Activated CD4-positive, alpha-beta T cell treated with anti-CD3 and anti-CD28 coated beads, Interleukin-2, amount 10 ng/mL, durations not matched to agents 24 days and 14 days (primary cell): ENCODE measurements at regions of chr6 and their contacts with region 1.

Region 1: DNA sequence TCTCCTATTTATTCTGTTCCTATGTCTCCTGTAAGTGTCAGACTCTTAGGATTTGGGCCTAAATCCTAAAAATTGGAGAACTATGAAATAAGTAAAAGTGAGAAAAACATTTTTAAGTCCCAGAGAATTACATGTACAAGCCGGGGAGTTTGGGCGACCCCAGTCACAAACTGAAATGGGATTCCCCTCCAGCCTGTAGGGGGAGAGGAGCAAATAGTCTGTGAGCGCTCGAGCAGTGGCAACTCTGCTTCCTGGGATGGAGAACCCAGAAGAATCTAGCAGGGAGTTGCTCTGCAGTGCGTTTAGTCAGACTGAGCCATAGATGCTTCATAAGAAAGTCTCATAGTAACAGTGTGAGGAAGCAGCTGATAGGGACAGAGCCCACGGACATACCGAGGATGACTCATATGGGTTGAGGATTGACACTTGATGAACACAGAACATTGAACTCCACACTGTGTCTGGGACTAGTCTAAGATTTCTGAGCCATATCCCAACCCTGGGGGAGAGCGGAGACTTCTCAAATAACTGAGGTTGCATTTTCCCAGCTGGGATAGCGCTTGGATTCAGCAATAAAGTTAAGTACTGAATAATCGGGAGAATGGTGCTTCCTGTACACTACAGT is 437.2 kb downstream of the BCKDHB start:
- DNase-seq: no peak
- H3K4me3 Mint-ChIP-seq: no peak overlapping the region
- H3K27ac Mint-ChIP-seq: no peak overlapping the region
- H3K4me1 Mint-ChIP-seq: peaks cover 22% of the 10 kb centered on the region
- H3K27me3 Mint-ChIP-seq: no peaks in the 10 kb centered on the region

Region 2: GRCh38 chr6:80163658-80164187 is 380.0 kb before region 1 on chr6:
- intact Hi-C with region 1: loop called (anchors 1 kb)
- DNase-seq: peak; percentile 73
- H3K4me3 Mint-ChIP-seq: no peak overlapping the region
- H3K27ac Mint-ChIP-seq: no peak overlapping the region
- H3K4me1 Mint-ChIP-seq: peaks cover 15% of the 10 kb centered on the region
- H3K27me3 Mint-ChIP-seq: no peaks in the 10 kb centered on the region

Region 3: DNA sequence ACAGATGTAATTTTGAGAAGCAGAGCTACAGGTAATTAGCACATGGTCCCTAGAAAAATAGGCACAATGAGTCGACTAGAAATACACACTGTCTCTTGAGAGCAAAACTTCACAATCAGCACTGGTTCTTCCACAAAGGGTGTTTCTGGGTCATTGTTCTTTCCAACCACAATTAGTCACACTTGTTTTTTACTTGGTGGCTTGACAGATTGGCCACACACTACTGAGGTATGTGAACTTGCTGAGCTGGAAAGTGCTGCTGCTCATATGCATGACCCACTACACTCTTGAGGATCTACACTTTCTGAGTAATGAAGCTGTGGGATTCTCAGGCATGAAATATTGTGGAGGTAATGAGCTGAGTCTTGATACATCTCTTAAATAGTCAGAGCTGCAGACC is 89.5 kb before region 1 on chr6:
- intact Hi-C with region 1: loop called (anchors 2 kb)
- DNase-seq: no peak
- H3K4me3 Mint-ChIP-seq: no peak overlapping the region
- H3K27ac Mint-ChIP-seq: no peak overlapping the region
- H3K4me1 Mint-ChIP-seq: peaks cover 4% of the 10 kb centered on the region
- H3K27me3 Mint-ChIP-seq: no peaks in the 10 kb centered on the region

Region 4: DNA sequence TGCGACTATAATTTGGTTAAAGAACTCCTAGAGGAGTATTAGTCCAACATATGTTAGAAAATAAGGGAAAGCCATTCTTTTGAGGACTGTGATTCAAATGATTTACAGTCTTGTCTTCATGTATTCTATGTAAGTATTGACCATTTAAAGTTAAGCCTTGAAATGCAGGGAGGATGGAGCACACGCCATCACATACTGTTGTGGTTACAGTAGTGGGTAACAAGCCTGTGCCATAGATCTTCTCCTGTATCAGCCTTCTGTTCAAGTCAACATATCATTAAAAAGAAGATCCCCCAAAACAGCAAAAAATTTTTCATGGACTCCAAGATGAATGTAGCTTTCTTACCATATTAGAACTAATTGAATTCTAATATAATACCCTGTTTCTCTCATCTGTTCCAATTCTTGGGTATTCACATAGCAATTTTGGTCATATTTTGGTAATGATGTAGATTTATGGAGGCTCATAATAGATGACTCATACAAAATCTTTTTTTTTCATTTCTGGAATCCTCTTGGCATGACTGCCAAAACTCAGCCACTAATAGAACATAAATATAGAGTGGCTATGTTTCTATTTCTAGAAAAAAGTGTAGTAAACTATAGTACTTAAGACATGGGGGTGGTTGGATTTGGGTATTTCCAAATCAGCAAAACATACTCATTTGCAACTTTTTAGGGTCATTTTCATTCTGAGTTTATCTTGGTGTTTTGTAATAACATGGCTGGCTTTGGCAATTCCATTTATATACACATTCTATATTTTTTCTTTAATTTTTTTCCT is 23.7 kb before region 1 on chr6:
- intact Hi-C with region 1: no loop called
- DNase-seq: no peak
- H3K4me3 Mint-ChIP-seq: no peak overlapping the region
- H3K27ac Mint-ChIP-seq: no peak overlapping the region
- H3K4me1 Mint-ChIP-seq: peaks cover 8% of the 10 kb centered on the region
- H3K27me3 Mint-ChIP-seq: peaks cover 2% of the 10 kb centered on the region

Region 5: GRCh38 chr6:80566361-80566760 is 22.7 kb after region 1 on chr6:
- intact Hi-C with region 1: no loop called
- DNase-seq: no peak
- H3K4me3 Mint-ChIP-seq: no peak overlapping the region
- H3K27ac Mint-ChIP-seq: no peak overlapping the region
- H3K4me1 Mint-ChIP-seq: no peaks in the 10 kb centered on the region
- H3K27me3 Mint-ChIP-seq: no peaks in the 10 kb centered on the region

Region 6: DNA sequence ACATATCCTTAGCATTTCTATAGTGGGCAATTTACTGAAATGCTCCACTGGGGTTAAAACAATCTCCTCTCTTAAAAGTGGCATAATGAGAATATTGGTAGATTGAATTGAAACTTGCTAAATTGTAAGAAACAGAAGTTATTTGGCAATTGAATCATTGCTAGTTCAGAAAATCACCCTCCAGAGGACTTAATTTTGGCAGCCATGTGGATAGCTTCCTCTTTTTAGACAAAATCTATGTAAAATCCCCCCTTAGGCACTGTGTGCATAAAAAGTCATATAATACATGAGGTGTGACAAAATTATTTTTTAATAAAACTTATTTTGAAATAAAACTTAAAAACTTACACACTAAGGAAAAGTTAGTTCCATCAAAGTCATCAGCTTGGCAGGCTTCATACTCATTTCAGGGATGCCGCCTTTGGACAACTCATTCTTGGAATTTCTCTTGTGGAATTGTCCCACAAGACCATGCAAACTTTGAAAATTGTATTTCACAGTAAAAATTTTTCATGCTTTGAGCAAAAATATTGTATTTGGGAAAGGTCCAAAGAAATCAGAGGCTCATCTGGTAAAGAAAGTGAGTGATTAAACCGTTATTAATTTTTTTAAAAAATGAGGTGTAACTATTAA is 35.8 kb after region 1 on chr6:
- intact Hi-C with region 1: no loop called
- DNase-seq: no peak
- H3K4me3 Mint-ChIP-seq: no peak overlapping the region
- H3K27ac Mint-ChIP-seq: no peak overlapping the region
- H3K4me1 Mint-ChIP-seq: no peaks in the 10 kb centered on the region
- H3K27me3 Mint-ChIP-seq: no peaks in the 10 kb centered on the region